ENCODE measurements at regions of chr10 and their contacts with region 1.

Region 1: GRCh38 chr10:32958085-32959005 is at the start of gene ITGB1:
- DNase-seq: peak; percentile 90 to 96 (median 90)
- ATAC-seq: peak; percentile 81
- H3K4me3 ChIP-seq: peak within 1 kb of the TSS; percentile 81
- H3K27ac ChIP-seq: peak within 1 kb of the TSS; percentile 97
- H3K4me1 ChIP-seq: peaks cover 10 to 48% of the 10 kb centered on the region in 2 experiments
- H3K27me3 ChIP-seq: no peaks in the 10 kb centered on the region
- CTCF ChIP-seq: no peak
- EP300 ChIP-seq: 0 out of 2 replicates have a peak, but pooled peaks have one; percentile 9
- POLR2A ChIP-seq: peak; percentile 92
- RAD21 ChIP-seq: 0 out of 4 replicates have a peak, but pooled peaks of 1 of the 2 experiments have one; percentile 9
- polyA plus RNA-seq, gene ITGB1: 40.2 to 61.9 TPM

Region 2: DNA sequence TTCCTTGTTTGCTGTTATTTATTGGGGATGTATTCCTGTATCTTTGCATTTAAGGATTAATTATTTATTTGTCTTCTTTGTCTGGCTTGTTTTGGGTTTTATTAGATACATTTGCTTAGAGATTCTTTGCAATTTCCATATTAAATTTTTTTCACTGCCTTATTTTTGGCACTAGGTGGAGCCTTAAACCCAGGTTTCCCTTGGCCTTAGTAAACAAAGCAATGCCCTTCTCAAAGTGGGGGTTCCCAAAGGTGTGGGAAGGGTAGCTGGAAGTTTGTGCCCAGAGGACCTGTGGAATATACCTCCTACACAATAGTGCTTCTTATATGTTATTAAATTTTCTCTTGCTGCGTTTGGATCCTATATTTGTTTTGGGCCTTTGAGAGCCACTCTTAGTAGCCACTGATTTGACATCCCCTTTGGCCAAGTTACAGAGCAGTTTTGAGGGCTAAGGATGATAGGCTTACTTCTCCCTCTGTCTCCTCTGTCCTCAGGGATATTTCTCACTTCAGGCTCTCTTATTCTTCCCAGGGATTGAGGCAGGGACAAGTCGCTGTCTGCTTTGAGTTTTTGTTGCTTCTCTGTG is 162.7 kb before region 1 on chr10:
- CTCF ChIA-PET with region 1: no interaction called
- POLR2A ChIA-PET with region 1: no interaction called
- in situ Hi-C with region 1: no loop called
- intact Hi-C with region 1: loop called (anchors 2 kb)
- DNase-seq: peak; percentile 15 to 37 (median 22)
- ATAC-seq: peak; percentile 72
- H3K4me3 ChIP-seq: no peak overlapping the region
- H3K27ac ChIP-seq: no peak overlapping the region
- H3K4me1 ChIP-seq: no peaks in the 10 kb centered on the region
- H3K27me3 ChIP-seq: no peaks in the 10 kb centered on the region
- CTCF ChIP-seq: peak; percentile 59 to 84 (median 64); a peak in 5 of 6 replicates
- EP300 ChIP-seq: no peak
- POLR2A ChIP-seq: no peak
- RAD21 ChIP-seq: peak; percentile 96 to 97

Region 3: DNA sequence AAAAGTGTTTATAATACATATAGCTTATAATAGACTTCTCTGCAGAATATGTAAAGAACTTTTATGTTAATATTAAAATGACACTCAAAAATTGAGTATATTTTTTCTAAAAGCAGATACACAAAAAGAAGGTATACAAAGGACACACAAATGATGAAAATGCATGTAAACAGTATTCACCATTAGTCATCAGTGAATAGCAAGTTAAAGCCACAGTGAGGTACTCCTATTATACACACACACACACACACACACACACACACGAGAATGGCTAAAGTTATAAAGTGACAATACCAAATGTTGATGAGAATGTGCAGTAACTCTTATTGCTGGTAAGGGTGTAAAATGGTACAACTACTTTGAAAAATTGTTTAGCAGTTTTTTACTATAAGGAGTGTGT is 93.2 kb before region 1 on chr10:
- CTCF ChIA-PET with region 1: no interaction called
- POLR2A ChIA-PET with region 1: no interaction called
- in situ Hi-C with region 1: no loop called
- intact Hi-C with region 1: no loop called
- DNase-seq: no peak
- ATAC-seq: no peak
- H3K4me3 ChIP-seq: no peak overlapping the region
- H3K27ac ChIP-seq: no peak overlapping the region
- H3K4me1 ChIP-seq: no peaks in the 10 kb centered on the region
- H3K27me3 ChIP-seq: 0 out of 5 replicates have a peak, but pooled peaks cover 0 to 2% of the 10 kb centered on the region in 2 experiments
- CTCF ChIP-seq: no peak
- EP300 ChIP-seq: no peak
- POLR2A ChIP-seq: no peak
- RAD21 ChIP-seq: no peak

Region 4: DNA sequence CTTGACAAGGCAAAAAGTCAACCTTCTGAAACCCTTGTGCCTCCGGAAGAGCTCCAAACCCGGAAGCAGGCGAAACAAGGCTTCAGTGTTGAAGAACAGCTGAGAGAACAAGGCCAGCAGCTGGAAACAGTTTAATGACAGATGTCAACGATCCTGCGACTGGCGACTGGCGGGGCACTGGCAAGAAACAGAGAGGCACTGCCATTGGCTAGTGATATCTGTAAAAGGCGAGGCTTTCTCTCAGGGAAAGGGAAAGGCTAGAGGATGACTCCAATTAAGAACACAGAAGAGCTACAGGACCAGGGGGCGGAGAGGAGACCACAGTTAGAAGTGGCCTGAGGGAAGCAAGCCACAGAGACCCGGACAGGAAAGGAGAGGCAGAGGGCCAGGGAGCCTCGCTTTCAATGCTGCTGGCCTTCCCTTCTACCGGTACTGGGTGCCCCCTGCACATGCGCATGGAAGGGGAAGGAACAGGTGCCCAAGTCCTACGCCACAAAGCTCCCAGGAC is 19.7 kb before region 1 on chr10:
- CTCF ChIA-PET with region 1: no interaction called
- POLR2A ChIA-PET with region 1: interaction called, 16 read pairs
- in situ Hi-C with region 1: no loop called
- intact Hi-C with region 1: no loop called
- DNase-seq: peak in 2 of 4 experiments; percentile 14 to 43
- ATAC-seq: peak; percentile 57
- H3K4me3 ChIP-seq: no peak overlapping the region
- H3K27ac ChIP-seq: peak overlapping the region; percentile 22; the same call in 1 of the 3 replicates
- H3K4me1 ChIP-seq: peaks cover 8 to 36% of the 10 kb centered on the region in 2 experiments
- H3K27me3 ChIP-seq: no peaks in the 10 kb centered on the region
- CTCF ChIP-seq: no peak
- EP300 ChIP-seq: no peak
- POLR2A ChIP-seq: no peak
- RAD21 ChIP-seq: no peak

Region 5: GRCh38 chr10:32971536-32972091 is 13.3 kb after region 1 on chr10:
- CTCF ChIA-PET with region 1: no interaction called
- POLR2A ChIA-PET with region 1: interaction called, 23 read pairs
- in situ Hi-C with region 1: no loop called
- intact Hi-C with region 1: loop called (anchors 1 kb)
- DNase-seq: peak; percentile 45 to 88 (median 64)
- ATAC-seq: peak; percentile 93
- H3K4me3 ChIP-seq: no peak overlapping the region
- H3K27ac ChIP-seq: peak overlapping the region; percentile 74
- H3K4me1 ChIP-seq: peaks cover 11 to 33% of the 10 kb centered on the region in 2 experiments
- H3K27me3 ChIP-seq: no peaks in the 10 kb centered on the region
- CTCF ChIP-seq: no peak
- EP300 ChIP-seq: peak; percentile 93
- POLR2A ChIP-seq: no peak
- RAD21 ChIP-seq: no peak; a peak in 2 of 4 replicates

Region 6: DNA sequence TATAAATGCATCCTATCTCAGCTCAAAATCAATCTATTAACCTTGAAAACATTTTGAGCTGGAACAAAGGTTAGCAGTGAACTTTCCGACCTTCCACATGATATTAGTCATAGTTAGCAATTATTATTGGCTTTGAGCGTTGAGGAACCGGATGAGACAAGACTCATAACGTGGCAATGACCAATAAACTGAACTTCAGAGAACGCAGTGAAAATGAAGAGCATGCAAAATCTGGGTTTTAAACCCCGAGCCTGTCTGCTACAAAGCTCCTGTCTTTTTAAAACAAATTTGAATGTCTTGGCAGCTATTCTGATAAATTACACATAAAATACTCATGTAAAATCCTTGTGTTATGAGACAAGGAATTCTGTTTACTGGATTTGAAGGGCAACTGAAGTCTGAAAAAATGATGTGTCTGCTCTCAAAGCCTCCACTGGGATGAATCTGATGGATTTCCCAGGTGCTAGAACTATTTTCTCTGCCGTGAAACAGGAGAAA is 74.4 kb after region 1 on chr10:
- CTCF ChIA-PET with region 1: no interaction called
- POLR2A ChIA-PET with region 1: no interaction called
- in situ Hi-C with region 1: no loop called
- intact Hi-C with region 1: no loop called
- DNase-seq: no peak
- ATAC-seq: no peak
- H3K4me3 ChIP-seq: no peak overlapping the region
- H3K27ac ChIP-seq: no peak overlapping the region
- H3K4me1 ChIP-seq: peaks cover 0 to 4% of the 10 kb centered on the region in 2 experiments; a peak in 1 of 5 replicates
- H3K27me3 ChIP-seq: peaks cover 5 to 13% of the 10 kb centered on the region in 2 experiments; a peak in 4 of 5 replicates
- CTCF ChIP-seq: no peak
- EP300 ChIP-seq: no peak
- POLR2A ChIP-seq: no peak
- RAD21 ChIP-seq: no peak

Region 7: DNA sequence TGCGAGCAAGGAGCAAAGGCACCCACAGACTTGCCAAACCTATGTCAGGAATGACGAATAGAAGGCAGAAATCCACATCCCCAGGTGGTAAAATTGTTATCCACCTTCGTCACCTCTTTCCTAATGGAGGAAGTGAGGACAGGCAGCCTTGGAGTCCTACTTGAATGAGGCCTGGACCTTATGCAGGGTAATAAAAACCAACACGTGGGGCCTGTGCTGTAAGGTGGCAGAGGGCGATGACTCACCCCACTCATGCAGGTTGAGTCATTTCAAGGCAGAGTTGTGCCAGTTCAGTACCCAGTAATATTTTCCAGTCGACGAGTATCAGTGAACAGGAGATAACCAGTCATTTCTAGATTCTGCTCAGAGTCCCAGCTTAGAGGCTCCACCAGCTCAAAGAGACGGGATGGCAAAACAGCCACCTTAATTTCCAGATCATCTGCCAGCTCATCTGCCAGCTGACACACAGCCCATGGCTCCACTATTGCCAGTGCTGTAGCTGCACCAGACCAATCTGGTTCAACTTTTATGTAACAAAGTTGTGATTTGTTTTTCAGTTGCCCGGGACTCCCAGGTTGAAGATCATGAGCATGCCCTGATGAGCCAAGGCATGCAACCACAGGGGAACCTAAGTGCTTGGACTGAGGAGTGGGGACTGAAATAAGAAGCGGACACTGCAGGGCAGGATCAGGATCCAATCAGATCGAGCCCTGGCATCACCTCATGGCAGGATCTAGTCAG is 175.8 kb after region 1 on chr10:
- CTCF ChIA-PET with region 1: no interaction called
- POLR2A ChIA-PET with region 1: no interaction called
- in situ Hi-C with region 1: no loop called
- intact Hi-C with region 1: no loop called
- DNase-seq: no peak
- ATAC-seq: no peak
- H3K4me3 ChIP-seq: no peak overlapping the region
- H3K27ac ChIP-seq: no peak overlapping the region
- H3K4me1 ChIP-seq: no peaks in the 10 kb centered on the region
- H3K27me3 ChIP-seq: peaks cover 4 to 25% of the 10 kb centered on the region in 2 experiments; a peak in 3 of 5 replicates
- CTCF ChIP-seq: no peak
- EP300 ChIP-seq: no peak
- POLR2A ChIP-seq: no peak
- RAD21 ChIP-seq: no peak

Measured in K562 (cell line).